Activated naive CD8-positive, alpha-beta T cell treated with anti-CD3 and anti-CD28 coated beads, Interleukin-2, amount 10 ng/mL, durations not matched to agents 7 days and 5 days (primary cell): ENCODE measurements at regions of chr1 and their contacts with region 1.

Region 1: DNA sequence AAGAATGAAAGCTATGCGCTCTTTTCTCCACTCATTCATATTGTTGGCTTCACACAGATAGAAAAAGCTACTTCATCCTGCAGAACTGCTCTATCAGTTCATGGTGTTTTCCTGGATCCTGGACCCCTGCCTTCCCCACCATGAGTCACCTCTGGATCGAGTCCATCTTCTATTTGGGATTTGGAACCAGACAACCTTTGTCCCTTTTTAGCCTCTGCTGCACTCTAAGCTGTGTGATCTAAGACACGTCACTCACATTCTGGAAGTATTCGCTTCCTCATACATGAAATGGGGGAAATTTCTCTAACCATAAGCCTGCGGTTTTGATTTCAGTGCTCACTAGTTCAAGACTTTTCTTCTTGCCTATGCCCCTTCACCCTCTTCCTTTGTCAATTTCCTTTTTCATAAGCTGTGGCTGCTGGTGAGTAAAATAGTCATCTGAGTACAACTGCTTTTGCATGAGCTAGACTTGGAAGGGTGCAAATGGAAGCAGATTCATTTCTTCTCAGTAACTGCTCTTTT is 14.1 kb upstream of the DEGS1 start:
- DNase-seq: no peak
- ATAC-seq: peak; percentile 93
- H3K4me3 Mint-ChIP-seq: peak overlapping the region; percentile 48
- H3K27ac Mint-ChIP-seq: peak overlapping the region; percentile 77
- H3K4me1 Mint-ChIP-seq: peaks cover 40% of the 10 kb centered on the region
- H3K27me3 Mint-ChIP-seq: peaks cover 10% of the 10 kb centered on the region

Region 2: DNA sequence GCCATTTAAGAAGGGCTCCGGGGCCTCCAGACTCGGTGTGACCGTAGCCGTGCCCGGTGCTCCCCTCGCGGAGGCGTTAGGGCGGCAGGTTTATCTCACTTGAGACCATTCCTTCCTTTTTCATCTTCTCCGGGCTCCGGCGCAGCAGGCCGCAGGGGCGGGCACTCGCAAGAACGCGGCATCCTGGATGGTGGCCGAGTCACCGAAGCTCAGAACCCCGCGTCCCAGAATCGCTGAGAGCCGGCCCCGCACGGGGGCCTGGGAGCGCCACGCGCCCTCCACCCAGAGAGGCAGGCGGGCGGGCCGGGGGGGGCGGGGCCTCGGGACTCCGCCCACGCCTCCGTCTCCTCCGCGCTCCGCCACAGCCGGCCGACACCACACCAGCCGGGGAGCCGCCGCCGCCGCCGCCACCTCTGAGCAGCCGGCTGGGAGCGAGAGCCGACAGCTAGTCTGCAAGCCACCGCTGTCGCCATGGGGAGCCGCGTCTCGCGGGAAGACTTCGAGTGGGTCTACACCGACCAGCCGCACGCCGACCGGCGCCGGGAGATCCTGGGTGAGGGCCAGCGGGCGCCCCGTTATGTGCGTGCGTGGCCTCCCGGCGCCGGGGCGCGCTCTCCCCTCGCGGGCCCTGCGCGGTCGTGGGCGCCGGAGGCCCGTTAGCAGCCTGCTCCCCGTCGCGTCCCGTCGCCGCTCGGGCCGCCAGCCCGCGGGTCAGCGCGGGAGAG is 14.1 kb after region 1 on chr1 and contains the start of gene DEGS1:
- POLR2A ChIA-PET with region 1: interaction called, 58 read pairs
- DNase-seq: peak; percentile 90
- ATAC-seq: peak; percentile 80
- H3K4me3 Mint-ChIP-seq: peak within 1 kb of the TSS; percentile 96
- H3K27ac Mint-ChIP-seq: peak within 1 kb of the TSS; percentile 98
- H3K4me1 Mint-ChIP-seq: peaks cover 42% of the 10 kb centered on the region
- H3K27me3 Mint-ChIP-seq: no peaks in the 10 kb centered on the region
- total RNA-seq, gene DEGS1: 63.8 to 65.8 TPM

Region 3: GRCh38 chr1:224338150-224338838 is 169.4 kb after region 1 on chr1:
- POLR2A ChIA-PET with region 1: no interaction called
- DNase-seq: no peak
- ATAC-seq: no peak
- H3K4me3 Mint-ChIP-seq: no peak overlapping the region
- H3K27ac Mint-ChIP-seq: no peak overlapping the region
- H3K4me1 Mint-ChIP-seq: peaks cover 16% of the 10 kb centered on the region
- H3K27me3 Mint-ChIP-seq: peaks cover 4% of the 10 kb centered on the region